Right ventricle myocardium superior (tissue), 1 donor: ENCODE measurements at regions of chr1 and their contacts with region 1.

Region 1: GRCh38 chr1:3275471-3276340 is 178.8 kb upstream of the ARHGEF16 start:
- DNase-seq: peak; percentile 62
- ATAC-seq: peak; percentile 80

Region 2: GRCh38 chr1:3012456-3013291 is 263.0 kb before region 1 on chr1:
- intact Hi-C with region 1: loop called (anchors 10 kb)
- DNase-seq: peak; percentile 75
- ATAC-seq: peak; percentile 93